A549 (cell line): ENCODE measurements at regions of chr2 and their contacts with region 1.

Region 1: DNA sequence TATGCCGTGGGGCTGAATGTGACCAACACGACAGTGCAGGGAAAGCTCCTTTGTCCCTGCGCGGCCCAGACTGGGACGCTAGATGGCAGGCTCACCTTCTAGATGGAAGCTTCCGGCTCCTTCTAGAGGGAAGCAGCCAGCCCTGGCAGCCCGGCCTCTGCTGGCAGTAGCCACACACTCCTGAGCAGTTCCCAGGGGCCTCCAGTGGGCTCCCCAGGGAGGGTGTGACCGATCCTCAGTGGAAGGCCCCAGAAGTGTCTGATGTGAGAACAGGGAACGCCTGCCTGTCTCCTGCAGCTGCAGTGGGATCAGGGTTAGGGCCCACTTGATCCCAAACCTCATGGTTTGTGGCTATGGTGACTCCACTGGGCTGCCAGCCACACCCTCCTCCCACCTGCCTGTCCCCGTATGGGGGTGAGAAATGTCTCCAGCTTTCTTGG is 48.5 kb upstream of the LRPPRC start:
- DNase-seq: peak; percentile 91
- ATAC-seq: peak; percentile 100
- H3K4me3 ChIP-seq: no peak overlapping the region
- H3K27ac ChIP-seq: peak overlapping the region; percentile 67 to 87
- H3K4me1 ChIP-seq: peaks cover 4% of the 10 kb centered on the region
- CTCF ChIP-seq: peak; percentile 98
- EP300 ChIP-seq: no peak
- POLR2A ChIP-seq: no peak
- RAD21 ChIP-seq: peak; percentile 98

Region 2: DNA sequence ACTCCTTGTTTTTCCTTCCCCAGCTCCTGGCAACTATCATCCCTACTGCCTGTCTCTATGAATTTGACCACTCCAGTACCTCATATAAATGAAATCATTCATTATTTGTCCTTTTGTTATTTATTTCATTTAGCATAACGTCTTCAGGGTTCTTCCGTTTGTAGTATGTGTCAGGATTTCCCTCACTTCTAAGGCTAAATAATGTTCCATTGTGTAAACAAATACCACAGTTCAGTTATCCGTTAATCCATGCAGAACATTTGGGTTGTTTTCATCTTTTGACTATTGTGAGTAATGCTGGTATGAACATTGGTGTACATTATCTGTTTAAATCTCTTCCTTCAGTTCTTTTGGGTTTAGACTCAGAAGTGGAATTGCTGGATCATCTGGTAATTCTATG is 251.6 kb before region 1 on chr2:
- CTCF ChIA-PET with region 1: no interaction called
- POLR2A ChIA-PET with region 1: no interaction called
- DNase-seq: no peak
- ATAC-seq: no peak
- H3K4me3 ChIP-seq: no peak overlapping the region
- H3K27ac ChIP-seq: no peak overlapping the region
- H3K4me1 ChIP-seq: no peaks in the 10 kb centered on the region
- CTCF ChIP-seq: no peak
- EP300 ChIP-seq: no peak
- POLR2A ChIP-seq: no peak
- RAD21 ChIP-seq: no peak

Region 3: GRCh38 chr2:44075541-44075940 is 31.2 kb after region 1 on chr2:
- CTCF ChIA-PET with region 1: interaction called, 13 read pairs
- POLR2A ChIA-PET with region 1: no interaction called
- DNase-seq: peak in 1 of 2 experiments; percentile 38
- ATAC-seq: peak in 1 of 2 experiments; percentile 24; a peak in 2 of 6 replicates
- H3K4me3 ChIP-seq: no peak overlapping the region
- H3K27ac ChIP-seq: no peak overlapping the region
- H3K4me1 ChIP-seq: no peaks in the 10 kb centered on the region
- CTCF ChIP-seq: no peak
- EP300 ChIP-seq: no peak
- POLR2A ChIP-seq: no peak
- RAD21 ChIP-seq: no peak

Region 4: DNA sequence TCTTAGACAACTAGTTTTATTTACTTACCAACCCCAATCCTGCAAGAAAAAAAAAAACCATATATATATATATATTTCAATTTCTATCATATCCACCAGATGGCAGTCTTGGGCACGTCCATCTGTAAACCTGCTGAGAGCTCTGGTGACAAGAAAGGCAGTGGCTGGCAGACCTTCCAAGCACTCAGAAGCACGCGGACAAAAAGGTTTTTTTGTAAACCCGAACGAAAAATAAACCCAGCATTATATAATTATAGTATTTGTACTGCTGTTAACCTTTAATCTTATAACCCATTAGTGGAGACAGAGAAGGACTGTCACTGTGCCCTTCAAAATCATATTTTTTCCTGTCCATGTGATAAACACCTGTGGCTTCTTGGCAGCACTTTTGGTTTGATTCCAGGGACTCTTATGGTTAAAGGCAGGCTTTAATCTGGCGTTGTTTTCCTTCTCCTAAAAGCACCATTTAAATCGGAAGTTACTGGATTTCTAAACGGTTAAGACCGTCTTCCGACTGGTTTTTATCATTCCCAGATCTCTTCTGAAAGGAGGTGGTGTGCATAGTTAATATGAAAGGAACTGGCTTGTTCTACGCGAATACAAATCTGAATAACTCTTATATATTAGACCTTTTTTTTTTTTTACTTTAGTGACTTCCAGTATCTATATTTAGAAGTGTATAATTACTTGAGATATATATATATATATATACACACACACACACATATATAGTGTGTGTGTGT is 200.0 kb after region 1 on chr2:
- CTCF ChIA-PET with region 1: interaction called, 12 read pairs
- POLR2A ChIA-PET with region 1: no interaction called
- DNase-seq: peak; percentile 71 to 84
- ATAC-seq: peak; percentile 66 to 74; a peak in 4 of 6 replicates
- H3K4me3 ChIP-seq: peak overlapping the region; percentile 35
- H3K27ac ChIP-seq: peak overlapping the region; percentile 73 to 78
- H3K4me1 ChIP-seq: peaks cover 60% of the 10 kb centered on the region
- CTCF ChIP-seq: peak; percentile 94
- EP300 ChIP-seq: no peak
- POLR2A ChIP-seq: no peak
- RAD21 ChIP-seq: peak; percentile 81 to 94

Region 5: DNA sequence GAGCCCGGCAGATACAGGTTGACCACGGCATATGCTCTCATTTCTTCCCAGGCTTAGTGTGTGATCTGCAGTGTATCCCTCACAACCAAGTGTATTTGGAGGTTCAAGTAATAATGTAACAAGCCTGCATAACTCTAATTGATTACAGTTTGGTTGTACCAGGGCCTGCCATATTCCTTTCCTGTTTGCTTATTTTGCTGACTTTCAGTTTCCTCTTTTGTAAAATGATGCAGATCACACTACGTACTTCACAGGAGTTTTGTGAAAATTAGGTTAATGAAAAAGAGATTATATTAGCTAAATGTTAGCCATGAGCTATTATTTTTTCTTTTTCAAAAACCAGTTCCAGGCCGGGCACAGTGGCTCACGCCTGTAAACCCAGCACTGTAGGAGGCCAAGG is 256.8 kb after region 1 on chr2:
- CTCF ChIA-PET with region 1: interaction called, 18 read pairs
- POLR2A ChIA-PET with region 1: no interaction called
- DNase-seq: no peak
- ATAC-seq: no peak
- H3K4me3 ChIP-seq: no peak overlapping the region
- H3K27ac ChIP-seq: no peak overlapping the region
- H3K4me1 ChIP-seq: no peaks in the 10 kb centered on the region
- CTCF ChIP-seq: no peak
- EP300 ChIP-seq: no peak
- POLR2A ChIP-seq: no peak
- RAD21 ChIP-seq: no peak

Region 6: GRCh38 chr2:44342854-44343253 is 298.6 kb after region 1 on chr2:
- CTCF ChIA-PET with region 1: interaction called, 22 read pairs
- POLR2A ChIA-PET with region 1: interaction called, 3 read pairs
- DNase-seq: peak; percentile 28 to 66
- ATAC-seq: peak; percentile 62 to 81; a peak in 3 of 6 replicates
- H3K4me3 ChIP-seq: no peak overlapping the region
- H3K27ac ChIP-seq: no peak overlapping the region
- H3K4me1 ChIP-seq: no peaks in the 10 kb centered on the region
- CTCF ChIP-seq: peak; percentile 68
- EP300 ChIP-seq: no peak
- POLR2A ChIP-seq: no peak
- RAD21 ChIP-seq: peak; percentile 77 to 93

Region 7: DNA sequence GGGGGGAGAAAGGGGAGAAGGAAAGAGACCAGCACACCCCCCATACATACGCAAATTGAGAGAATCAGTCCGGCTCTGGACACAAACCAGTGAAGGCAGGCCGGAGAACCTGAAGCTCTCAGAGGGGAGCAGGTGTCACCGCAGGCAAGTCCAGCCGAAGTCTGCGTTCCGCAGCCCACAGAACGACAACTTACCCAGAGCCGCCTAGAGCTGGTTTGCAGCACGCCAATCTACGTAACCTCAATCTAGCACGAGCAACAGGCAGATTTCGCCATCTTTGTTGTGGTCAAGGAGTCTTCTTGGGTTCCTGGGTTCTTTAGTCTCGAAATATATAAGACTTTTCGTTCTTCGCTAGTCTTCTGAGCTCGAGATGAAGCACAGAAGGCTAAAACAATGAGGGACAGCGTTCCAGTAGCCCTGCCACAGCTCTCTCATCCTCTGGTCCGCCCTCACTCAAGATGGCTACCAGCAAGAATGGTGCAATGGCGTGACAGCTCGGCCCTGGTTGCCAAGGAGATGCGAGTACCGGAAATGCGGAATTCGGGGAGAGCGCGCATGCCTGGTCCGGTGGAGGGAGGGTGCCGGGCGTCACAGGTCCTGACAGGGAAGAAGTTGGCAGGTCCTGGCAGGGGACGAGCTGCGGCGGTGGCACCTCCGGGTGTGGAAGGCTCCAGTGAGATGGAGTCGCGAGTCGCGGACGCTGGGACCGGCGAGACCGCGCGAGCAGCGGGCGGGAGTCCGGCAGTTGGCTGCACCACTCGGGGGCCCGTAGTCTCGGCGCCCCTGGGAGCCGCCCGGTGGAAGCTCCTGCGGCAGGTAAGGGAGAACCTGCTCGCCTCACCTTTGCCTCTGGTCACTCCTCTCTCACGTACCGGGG is 317.3 kb after region 1 on chr2 and contains the starts of genes CAMKMT and PREPL:
- CTCF ChIA-PET with region 1: interaction called, 15 read pairs
- POLR2A ChIA-PET with region 1: no interaction called
- DNase-seq: peak; percentile 96 to 99
- ATAC-seq: peak; percentile 88 to 91
- H3K4me3 ChIP-seq: peak within 1 kb of the TSS; percentile 77
- H3K27ac ChIP-seq: peak within 1 kb of the TSS; percentile 93 to 94
- H3K4me1 ChIP-seq: peaks cover 20% of the 10 kb centered on the region
- CTCF ChIP-seq: no peak
- EP300 ChIP-seq: no peak
- POLR2A ChIP-seq: peak; percentile 92
- RAD21 ChIP-seq: no peak
- polyA plus RNA-seq, gene CAMKMT: 10.0 and 15.7 TPM in 2 replicates
- polyA plus RNA-seq, gene PREPL: 78.8 and 92.7 TPM in 2 replicates